ENCODE measurements at regions of chrX and their contacts with region 1.

Region 1: DNA sequence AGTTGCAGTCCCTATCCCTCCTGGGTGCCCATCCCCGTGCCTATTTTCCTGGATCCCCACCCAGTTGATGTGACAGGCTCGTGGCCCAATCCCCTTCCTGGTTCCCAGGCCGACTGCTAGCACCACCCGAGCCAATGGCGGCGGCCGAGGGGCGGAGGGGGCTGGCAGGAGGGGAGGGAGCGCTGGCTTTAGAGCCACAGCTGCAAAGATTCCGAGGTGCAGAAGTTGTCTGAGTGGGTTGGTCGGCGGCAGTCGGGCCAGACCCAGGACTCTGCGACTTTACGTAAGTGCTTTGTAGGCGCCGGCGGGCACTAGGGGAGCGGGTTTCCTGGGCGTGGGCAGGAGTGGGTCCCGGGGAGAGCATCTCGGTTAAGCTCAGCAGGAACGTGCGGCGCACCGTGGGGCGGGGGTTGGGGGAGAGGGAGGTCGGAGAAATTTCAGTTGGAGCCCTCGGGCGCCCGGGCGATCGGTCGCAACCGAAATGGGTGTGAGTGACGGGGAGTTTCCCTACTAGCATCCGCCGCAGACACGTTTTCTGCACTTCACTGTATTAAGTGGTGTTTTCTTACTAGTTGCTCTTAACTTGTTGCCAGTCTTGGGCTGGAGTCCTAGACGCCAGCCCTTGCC is at the start of gene PLS3:
- DNase-seq: peak; percentile 87 to 89
- ATAC-seq: peak; percentile 86 to 96 (median 94)
- H3K4me3 ChIP-seq: peak within 1 kb of the TSS; percentile 39 to 81 (median 72)
- H3K27ac ChIP-seq: peak within 1 kb of the TSS; percentile 83 to 97 (median 94)
- H3K4me1 ChIP-seq: peaks cover 3 to 45% (median 10%) of the 10 kb centered on the region in 9 donors
- H3K27me3 ChIP-seq: peaks cover 0 to 99% (median 0%) of the 10 kb centered on the region in 7 donors
- CTCF ChIP-seq: no peak
- total RNA-seq, gene PLS3: 31.1 to 56.9 (median 39.0) TPM

Region 2: DNA sequence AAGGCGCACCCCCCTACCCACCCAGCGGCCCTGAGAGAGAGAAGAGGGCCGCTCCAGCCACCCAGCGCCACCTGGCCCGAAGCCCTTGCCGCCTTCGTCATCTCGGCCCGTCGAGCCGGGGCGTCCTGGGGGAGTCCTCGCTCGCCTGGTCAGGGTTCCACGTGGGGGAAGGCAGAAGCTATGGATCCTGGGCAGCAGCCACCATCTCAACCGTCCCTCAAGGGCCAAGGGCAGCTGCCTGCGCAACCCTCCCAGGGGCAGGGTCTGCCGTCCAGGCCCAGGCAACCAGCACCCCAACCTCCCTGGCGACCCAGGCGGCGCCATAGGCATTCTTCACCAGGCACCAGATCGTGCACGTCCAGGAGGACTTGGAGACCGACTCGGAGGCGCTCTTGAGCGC is 492.2 kb before region 1 on chrX:
- intact Hi-C with region 1: no loop called
- DNase-seq: no peak
- ATAC-seq: no peak
- H3K4me3 ChIP-seq: no peak overlapping the region
- H3K27ac ChIP-seq: peak overlapping the region in 1 of 10 donors; percentile 47
- H3K4me1 ChIP-seq: peaks cover 0 to 11% (median 0%) of the 10 kb centered on the region in 9 donors
- H3K27me3 ChIP-seq: peaks cover 0 to 18% (median 0%) of the 10 kb centered on the region in 7 donors
- CTCF ChIP-seq: no peak

Region 3: DNA sequence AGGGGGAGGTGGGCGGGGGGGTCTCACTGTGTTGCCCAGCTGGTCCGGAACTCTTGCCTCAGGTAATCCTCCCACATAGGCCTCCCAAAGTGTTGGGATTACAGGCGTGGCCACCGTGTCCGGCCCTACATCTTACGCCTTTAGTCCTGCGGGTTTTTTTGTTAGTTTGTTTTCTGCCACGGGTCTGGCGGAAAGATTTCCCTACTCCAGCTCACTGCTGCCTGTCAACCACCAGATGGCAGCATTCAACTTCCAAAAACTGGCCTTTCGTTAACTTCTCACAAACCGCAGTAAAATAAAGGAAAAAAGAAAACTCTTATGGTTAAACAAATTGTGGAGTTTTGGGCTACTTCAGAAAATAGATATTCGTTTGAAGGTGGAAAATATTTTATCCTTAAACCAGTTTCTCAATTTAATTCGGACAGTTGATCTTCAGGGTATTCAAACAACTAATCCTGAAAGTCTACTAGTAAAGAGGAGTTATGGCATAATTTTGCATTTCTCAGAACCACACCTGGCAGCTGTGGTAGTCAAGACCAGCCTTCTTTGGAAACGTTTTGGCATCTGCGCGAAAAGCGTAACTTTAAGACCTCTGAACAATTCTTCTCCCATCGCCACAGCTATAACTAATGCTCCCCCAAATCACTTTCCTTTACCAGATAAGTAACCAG is 230.5 kb before region 1 on chrX:
- intact Hi-C with region 1: loop called in 5 of 10 experiments (anchors 5 to 10 kb)
- DNase-seq: peak in 1 of 2 donors; percentile 28
- ATAC-seq: peak in 6 of 8 donors; percentile 33 to 69 (median 53)
- H3K4me3 ChIP-seq: peak overlapping the region in 3 of 10 donors; percentile 27 to 31 (median 28)
- H3K27ac ChIP-seq: no peak overlapping the region
- H3K4me1 ChIP-seq: peaks cover 0 to 5% (median 0%) of the 10 kb centered on the region in 9 donors
- H3K27me3 ChIP-seq: peaks cover 0 to 23% (median 0%) of the 10 kb centered on the region in 7 donors
- CTCF ChIP-seq: peak; percentile 53 to 89 (median 75)

Region 4: GRCh38 chrX:115449742-115450141 is 111.3 kb before region 1 on chrX:
- intact Hi-C with region 1: loop called in 1 of 10 experiments (anchors 10 kb)
- DNase-seq: peak; percentile 54 to 56
- ATAC-seq: peak in 7 of 8 donors; percentile 31 to 73 (median 49)
- H3K4me3 ChIP-seq: no peak overlapping the region
- H3K27ac ChIP-seq: peak overlapping the region in 2 of 10 donors; percentile 15 to 29
- H3K4me1 ChIP-seq: peaks cover 0 to 17% (median 4%) of the 10 kb centered on the region in 9 donors
- H3K27me3 ChIP-seq: peaks cover 0 to 57% (median 0%) of the 10 kb centered on the region in 7 donors
- CTCF ChIP-seq: no peak

Region 5: DNA sequence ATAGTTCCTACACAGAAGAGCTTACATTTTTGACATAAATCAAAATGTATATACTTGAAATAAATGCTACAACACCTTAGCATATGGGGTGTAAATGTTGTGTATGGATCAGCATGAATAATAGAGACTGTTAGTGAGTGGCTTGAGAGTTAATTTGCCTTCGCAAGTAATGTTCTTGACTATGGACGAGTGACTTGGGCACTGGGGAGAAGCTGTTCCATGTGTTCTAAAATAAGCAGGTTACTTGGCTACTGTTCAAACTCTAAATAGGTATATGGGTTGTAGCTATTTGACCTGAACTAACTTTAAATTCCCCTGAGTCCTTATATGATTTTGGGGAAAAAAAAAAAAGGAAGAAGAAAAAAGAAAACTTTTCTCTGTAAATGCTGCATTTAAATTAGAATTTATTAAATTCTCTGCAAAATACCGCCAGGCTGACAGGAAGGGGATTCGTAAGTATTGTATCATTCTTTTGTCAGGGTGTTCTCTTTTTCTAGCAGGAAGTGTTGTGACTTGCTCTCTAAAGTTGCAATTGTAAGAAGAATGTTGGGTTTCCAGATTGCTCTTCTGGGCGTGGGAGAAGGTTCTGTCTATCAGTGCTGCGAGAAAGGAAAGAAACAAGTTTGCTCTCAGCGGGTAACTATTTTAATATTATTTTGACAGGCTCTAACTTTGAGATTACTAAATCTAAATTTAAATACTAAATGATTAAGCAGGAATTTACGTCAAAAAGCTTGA is 32.1 kb after region 1 on chrX:
- intact Hi-C with region 1: loop called in 1 of 10 experiments (anchors 2 kb)
- DNase-seq: no peak
- ATAC-seq: peak in 7 of 8 donors; percentile 57 to 88 (median 68)
- H3K4me3 ChIP-seq: peak overlapping the region in 9 of 10 donors; percentile 27 to 60 (median 42)
- H3K27ac ChIP-seq: peak overlapping the region; percentile 23 to 90 (median 77)
- H3K4me1 ChIP-seq: peaks cover 0 to 52% (median 14%) of the 10 kb centered on the region in 9 donors
- H3K27me3 ChIP-seq: peaks cover 0 to 84% (median 0%) of the 10 kb centered on the region in 7 donors
- CTCF ChIP-seq: no peak

Region 6: DNA sequence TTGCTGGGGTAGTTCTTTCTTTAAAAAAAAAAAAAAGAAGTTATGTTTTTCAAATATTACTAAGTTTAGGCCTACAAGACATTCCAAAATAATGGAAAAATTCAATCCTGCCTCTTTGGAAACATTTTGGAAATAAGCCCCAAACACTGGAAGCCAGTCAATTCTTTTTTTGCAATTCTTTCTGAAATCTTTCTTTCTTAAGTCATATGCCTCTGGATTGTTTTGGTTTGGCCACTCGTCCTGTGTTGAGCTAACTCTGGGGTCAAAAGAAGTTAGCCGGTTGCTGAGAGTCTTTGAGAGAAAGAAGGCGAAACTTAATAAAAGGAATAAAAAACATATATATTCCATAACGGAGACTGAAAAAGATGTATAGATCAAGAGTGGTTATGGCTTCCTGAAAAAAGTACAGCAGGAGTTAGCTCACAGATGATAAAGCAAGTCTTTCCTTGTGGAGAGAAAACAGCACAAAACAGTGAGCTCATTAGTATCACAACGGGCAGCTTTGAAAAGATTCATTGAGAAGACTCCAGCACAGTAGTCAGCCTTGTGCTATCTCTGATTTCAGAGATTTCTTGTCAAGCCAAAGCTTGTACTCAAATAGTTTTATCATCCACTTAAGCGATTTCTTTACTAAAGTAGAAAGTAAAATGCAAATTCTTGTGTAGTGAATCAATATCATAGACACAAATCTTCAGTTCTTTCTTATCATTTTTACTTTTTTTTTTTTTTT is 64.6 kb after region 1 on chrX:
- intact Hi-C with region 1: loop called in 3 of 10 experiments (anchors 5 kb)
- DNase-seq: no peak
- ATAC-seq: peak in 7 of 8 donors; percentile 31 to 66 (median 43)
- H3K4me3 ChIP-seq: no peak overlapping the region
- H3K27ac ChIP-seq: peak overlapping the region in 7 of 10 donors; percentile 17 to 71 (median 62)
- H3K4me1 ChIP-seq: peaks cover 0 to 80% (median 11%) of the 10 kb centered on the region in 9 donors
- H3K27me3 ChIP-seq: peaks cover 0 to 88% (median 0%) of the 10 kb centered on the region in 7 donors
- CTCF ChIP-seq: no peak